HEK293 (cell line): ENCODE measurements at regions of chr16 and their contacts with region 1.

Region 1: DNA sequence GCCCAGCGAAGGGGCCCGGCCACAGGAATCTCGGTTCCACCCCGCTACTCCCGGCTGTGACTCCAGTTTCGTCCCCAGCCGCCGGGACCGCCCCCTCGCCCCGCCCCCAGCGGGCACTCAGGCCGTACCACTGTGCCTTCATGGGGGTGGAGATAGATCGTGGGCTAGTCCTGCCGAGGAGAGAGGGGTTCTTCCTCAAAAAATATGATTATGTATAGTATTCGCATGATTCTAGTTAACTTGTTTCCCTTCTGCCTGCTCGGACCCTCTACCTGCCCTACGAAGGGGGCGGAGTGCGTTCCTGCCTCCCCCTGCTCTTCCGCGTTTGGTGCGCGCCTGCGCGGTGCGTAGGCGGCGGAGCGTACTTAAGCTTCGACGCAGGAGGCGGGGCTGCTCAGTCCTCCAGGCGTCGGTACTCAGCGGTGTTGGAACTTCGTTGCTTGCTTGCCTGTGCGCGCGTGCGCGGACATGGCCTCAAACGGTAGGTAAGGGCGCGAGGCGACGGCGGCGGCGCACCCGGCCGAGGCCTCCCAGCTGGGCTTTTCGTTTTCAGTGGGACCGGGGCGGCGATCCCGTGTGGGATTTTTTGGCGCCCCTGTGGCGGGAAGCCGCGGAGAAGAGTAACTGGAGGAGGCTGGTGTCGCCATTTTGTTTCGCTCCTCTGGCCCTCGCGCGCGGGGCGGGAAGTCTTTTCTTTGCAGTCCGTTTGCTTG is at the start of gene FUS:
- H3K4me3 ChIP-seq: peak within 1 kb of the TSS; percentile 72
- H3K27ac ChIP-seq: peak within 1 kb of the TSS; percentile 91
- H3K4me1 ChIP-seq: no peaks in the 10 kb centered on the region
- CTCF ChIP-seq: peak; percentile 72; the same call in 1 of the 2 replicates

Region 2: DNA sequence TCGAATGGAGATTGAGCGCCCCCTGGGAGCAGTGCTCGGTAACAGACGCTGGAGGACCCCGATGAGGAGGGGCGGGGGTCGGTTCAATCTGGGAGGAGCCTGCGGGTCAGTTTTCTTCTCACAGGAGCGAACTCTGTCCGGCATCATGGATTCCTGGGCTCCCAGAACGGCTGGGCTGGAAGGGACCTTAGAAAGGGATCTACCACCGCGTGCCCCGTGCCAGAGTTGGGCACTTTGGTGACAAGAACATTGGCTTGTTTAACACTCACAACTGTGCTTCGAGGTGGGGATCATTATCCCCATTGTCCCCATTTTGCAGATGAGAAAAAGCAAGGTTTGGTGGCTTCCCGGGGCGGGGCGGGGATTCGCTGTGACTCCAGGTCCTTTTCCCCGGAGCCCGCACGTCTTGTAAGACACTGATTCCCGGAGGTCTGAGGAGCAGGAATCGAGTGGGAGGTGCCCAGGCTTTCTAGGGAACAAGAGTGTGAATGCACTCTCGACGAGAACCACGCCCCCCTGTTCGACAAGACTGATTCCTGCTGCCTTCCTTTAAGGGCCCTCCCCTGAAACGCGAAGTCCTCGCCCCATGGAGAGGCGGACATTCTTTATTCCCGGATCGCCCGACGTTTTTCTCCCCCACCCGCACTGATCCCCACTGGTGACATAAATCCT is 258.0 kb before region 1 on chr16:
- CTCF ChIA-PET with region 1: no interaction called
- POLR2A ChIA-PET with region 1: no interaction called
- H3K4me3 ChIP-seq: peak overlapping the region; percentile 54
- H3K27ac ChIP-seq: peak overlapping the region; percentile 25; the same call in 1 of the 2 replicates
- H3K4me1 ChIP-seq: no peaks in the 10 kb centered on the region
- CTCF ChIP-seq: peak; percentile 90; the same call in 1 of the 2 replicates

Region 3: GRCh38 chr16:31094424-31095120 is 85.3 kb before region 1 on chr16 and contains the start of gene VKORC1:
- CTCF ChIA-PET with region 1: no interaction called
- POLR2A ChIA-PET with region 1: interaction called, 13 read pairs
- H3K4me3 ChIP-seq: peak within 1 kb of the TSS; percentile 79
- H3K27ac ChIP-seq: peak within 1 kb of the TSS; percentile 85
- H3K4me1 ChIP-seq: peaks cover 3% of the 10 kb centered on the region; the same call in 1 of the 2 replicates
- CTCF ChIP-seq: no peak

Region 4: GRCh38 chr16:31142109-31143010 is 37.5 kb before region 1 on chr16:
- CTCF ChIA-PET with region 1: interaction called, 4 read pairs
- POLR2A ChIA-PET with region 1: interaction called, 107 read pairs
- H3K4me3 ChIP-seq: peak overlapping the region; percentile 27
- H3K27ac ChIP-seq: peak overlapping the region; percentile 63; the same call in 1 of the 2 replicates
- H3K4me1 ChIP-seq: no peaks in the 10 kb centered on the region; the same call in 1 of the 2 replicates
- CTCF ChIP-seq: peak; percentile 96

Region 5: DNA sequence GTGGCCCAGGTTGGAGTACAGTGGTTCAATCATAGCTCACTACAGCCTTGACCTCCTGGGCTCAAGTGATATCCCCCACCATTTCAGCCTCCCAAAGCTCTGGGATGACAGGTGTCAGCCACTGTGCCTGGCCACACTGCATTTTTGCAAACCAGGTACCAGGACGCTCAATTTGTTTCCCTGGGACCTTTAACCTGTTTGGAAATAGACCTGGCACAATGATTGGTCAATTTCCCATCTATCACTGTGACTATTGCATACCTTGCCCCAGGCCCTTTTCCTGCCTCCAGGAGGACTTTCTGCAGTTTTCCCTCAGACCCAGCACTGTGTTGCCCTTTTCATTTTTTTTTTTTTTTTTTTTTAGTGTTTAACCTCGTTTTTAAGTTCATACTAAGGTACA is 11.1 kb before region 1 on chr16:
- CTCF ChIA-PET with region 1: no interaction called
- POLR2A ChIA-PET with region 1: interaction called, 13 read pairs
- H3K4me3 ChIP-seq: no peak overlapping the region
- H3K27ac ChIP-seq: no peak overlapping the region
- H3K4me1 ChIP-seq: peaks cover 3% of the 10 kb centered on the region; the same call in 1 of the 2 replicates
- CTCF ChIP-seq: no peak

Region 6: GRCh38 chr16:31202414-31203375 is 22.8 kb after region 1 on chr16 and contains the start of gene PYCARD:
- CTCF ChIA-PET with region 1: no interaction called
- POLR2A ChIA-PET with region 1: interaction called, 10 read pairs
- H3K4me3 ChIP-seq: no peak within 1 kb of the TSS
- H3K27ac ChIP-seq: no peak within 1 kb of the TSS
- H3K4me1 ChIP-seq: no peaks in the 10 kb centered on the region
- CTCF ChIP-seq: no peak

Region 7: GRCh38 chr16:31286421-31287032 is 106.6 kb after region 1 on chr16:
- CTCF ChIA-PET with region 1: no interaction called
- POLR2A ChIA-PET with region 1: no interaction called
- H3K4me3 ChIP-seq: no peak overlapping the region
- H3K27ac ChIP-seq: no peak overlapping the region
- H3K4me1 ChIP-seq: no peaks in the 10 kb centered on the region
- CTCF ChIP-seq: no peak

Region 8: GRCh38 chr16:31458844-31459721 is 279.2 kb after region 1 on chr16 and contains the start of gene ARMC5:
- CTCF ChIA-PET with region 1: interaction called, 4 read pairs
- POLR2A ChIA-PET with region 1: interaction called, 16 read pairs
- H3K4me3 ChIP-seq: peak within 1 kb of the TSS; percentile 85
- H3K27ac ChIP-seq: peak within 1 kb of the TSS; percentile 83
- H3K4me1 ChIP-seq: peaks cover 5% of the 10 kb centered on the region
- CTCF ChIP-seq: peak; percentile 89